ENCODE measurements at regions of chr9 and their contacts with region 1.

Region 1: GRCh38 chr9:71819115-71819739 is 50.9 kb upstream of the CEMIP2 start:
- DNase-seq: peak in 1 of 2 experiments; percentile 5
- H3K4me3 ChIP-seq: no peak overlapping the region
- H3K4me3 Mint-ChIP-seq: no peak overlapping the region
- H3K27ac Mint-ChIP-seq: no peak overlapping the region
- H3K4me1 ChIP-seq: no peaks in the 10 kb centered on the region
- H3K4me1 Mint-ChIP-seq: peaks cover 7% of the 10 kb centered on the region
- H3K27me3 ChIP-seq: no peaks in the 10 kb centered on the region
- H3K27me3 Mint-ChIP-seq: no peaks in the 10 kb centered on the region
- CTCF ChIP-seq: peak in 1 of 2 experiments; percentile 16

Region 2: DNA sequence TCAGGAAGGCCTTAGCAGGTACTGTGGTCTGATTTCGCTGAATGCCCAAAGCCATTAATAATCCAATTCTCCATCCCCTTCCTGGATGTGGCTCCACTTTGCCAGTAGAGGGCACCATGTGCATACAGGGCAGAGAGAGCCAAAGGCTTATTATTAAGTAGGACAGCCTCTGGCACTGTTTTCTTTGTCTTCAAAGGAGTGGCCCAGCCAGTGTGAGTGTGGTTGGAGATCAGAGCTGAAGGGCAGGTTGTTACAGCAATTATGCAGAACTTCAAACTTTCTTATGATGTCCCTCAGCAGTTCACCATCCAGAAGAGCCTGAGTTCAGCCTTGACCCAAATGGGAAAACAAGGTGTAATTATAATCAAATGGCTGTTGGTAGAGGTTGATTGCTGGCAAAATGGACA is 12.3 kb before region 1 on chr9:
- CTCF ChIA-PET with region 1: no interaction called
- POLR2A ChIA-PET with region 1: no interaction called
- intact Hi-C with region 1: no loop called
- DNase-seq: peak; percentile 44 to 51
- H3K4me3 ChIP-seq: no peak overlapping the region
- H3K4me3 Mint-ChIP-seq: no peak overlapping the region
- H3K27ac Mint-ChIP-seq: no peak overlapping the region
- H3K4me1 ChIP-seq: no peaks in the 10 kb centered on the region
- H3K4me1 Mint-ChIP-seq: no peaks in the 10 kb centered on the region
- H3K27me3 ChIP-seq: no peaks in the 10 kb centered on the region
- H3K27me3 Mint-ChIP-seq: no peaks in the 10 kb centered on the region
- CTCF ChIP-seq: peak; percentile 31 to 33

Region 3: GRCh38 chr9:71847892-71848291 is 28.7 kb after region 1 on chr9:
- CTCF ChIA-PET with region 1: no interaction called
- POLR2A ChIA-PET with region 1: no interaction called
- intact Hi-C with region 1: no loop called
- DNase-seq: no peak
- H3K4me3 ChIP-seq: no peak overlapping the region
- H3K4me3 Mint-ChIP-seq: no peak overlapping the region
- H3K27ac Mint-ChIP-seq: no peak overlapping the region
- H3K4me1 ChIP-seq: no peaks in the 10 kb centered on the region
- H3K4me1 Mint-ChIP-seq: no peaks in the 10 kb centered on the region
- H3K27me3 ChIP-seq: no peaks in the 10 kb centered on the region
- H3K27me3 Mint-ChIP-seq: no peaks in the 10 kb centered on the region
- CTCF ChIP-seq: no peak

Region 4: DNA sequence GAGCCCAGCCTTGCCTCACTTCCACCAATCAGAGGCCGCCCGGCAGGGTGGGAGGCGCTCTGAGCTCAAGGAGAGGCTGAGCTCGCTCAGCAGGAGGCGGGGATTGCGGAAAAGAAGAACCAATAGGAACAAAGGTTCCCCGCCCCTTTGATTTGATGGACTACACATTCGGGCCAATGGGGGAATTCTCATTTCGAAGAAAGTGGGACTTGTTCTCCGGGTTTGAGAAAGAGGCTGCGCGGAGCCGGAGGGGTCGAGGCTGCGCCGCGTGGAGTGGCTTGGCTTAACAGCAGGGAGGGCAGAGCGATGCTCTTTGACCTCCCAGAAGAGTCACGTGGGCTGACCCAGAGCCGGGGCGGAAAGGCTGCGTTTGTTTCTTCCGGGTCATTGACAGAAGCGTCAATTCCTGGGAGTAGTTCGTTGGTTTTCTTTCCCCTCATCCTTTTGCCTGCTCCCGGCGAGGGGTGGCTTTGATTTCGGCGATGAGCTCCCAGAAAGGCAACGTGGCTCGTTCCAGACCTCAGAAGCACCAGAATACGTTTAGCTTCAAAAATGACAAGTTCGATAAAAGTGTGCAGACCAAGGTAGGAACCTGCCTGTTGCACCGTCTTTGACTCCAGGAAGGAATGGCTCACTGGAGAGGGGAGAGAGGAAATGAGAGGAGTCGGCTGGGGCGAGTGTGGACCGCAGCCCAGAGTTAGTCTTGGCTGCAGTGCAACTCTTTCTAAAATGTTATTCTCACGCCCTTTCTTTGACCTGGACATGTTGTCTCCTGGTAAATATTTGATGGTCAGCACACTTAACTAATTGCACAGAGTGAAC is 92.2 kb after region 1 on chr9 and contains the start of gene C9orf85:
- CTCF ChIA-PET with region 1: no interaction called
- POLR2A ChIA-PET with region 1: no interaction called
- intact Hi-C with region 1: loop called (anchors 5 kb)
- DNase-seq: peak; percentile 88 to 93
- H3K4me3 ChIP-seq: peak within 1 kb of the TSS; percentile 57
- H3K4me3 Mint-ChIP-seq: peak within 1 kb of the TSS; percentile 79
- H3K27ac Mint-ChIP-seq: peak within 1 kb of the TSS; percentile 78
- H3K4me1 ChIP-seq: no peaks in the 10 kb centered on the region
- H3K4me1 Mint-ChIP-seq: no peaks in the 10 kb centered on the region
- H3K27me3 ChIP-seq: no peaks in the 10 kb centered on the region
- H3K27me3 Mint-ChIP-seq: no peaks in the 10 kb centered on the region
- CTCF ChIP-seq: no peak
- total RNA-seq, gene C9orf85: 2.4 TPM in 2 replicates

Region 5: DNA sequence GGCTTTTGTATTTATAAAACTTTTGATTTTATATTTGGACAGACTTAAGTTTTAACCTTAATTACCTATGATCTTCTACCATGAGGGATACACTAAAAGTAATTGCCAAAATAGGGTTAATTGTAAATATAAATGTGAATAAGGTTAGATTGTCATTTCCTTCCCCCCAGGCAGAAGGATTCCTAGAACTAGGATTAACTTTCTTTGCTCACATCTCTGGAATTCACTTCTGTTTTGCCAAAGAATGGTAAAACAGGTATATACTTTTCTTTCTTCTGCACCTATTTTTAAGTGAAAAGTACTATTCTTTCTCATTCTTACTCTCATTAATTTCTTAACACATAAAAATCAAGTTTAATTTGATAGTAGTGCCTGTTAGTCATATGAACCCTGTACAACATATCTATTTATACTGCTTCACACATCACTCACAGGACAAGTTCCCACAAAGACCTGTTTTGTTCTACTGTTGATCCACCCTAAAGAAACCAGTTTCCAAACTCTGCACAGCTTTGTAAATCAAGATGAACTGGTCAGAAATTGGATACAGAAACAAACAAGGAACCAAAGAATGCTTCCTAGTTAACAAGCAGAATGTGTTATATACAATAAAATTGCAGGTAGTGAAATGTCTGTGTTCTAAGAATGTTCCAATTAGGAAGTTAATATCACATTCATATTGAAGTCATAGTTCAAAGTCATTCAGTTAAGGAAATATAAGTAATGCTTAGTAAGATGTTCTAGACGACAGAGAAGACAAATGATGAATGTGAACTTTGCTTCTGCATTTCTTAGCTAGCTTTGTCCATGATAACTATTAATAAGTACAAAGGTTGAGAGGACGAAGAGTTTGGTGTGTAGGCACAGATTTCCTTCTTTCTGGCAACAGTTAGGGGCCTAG is 125.5 kb after region 1 on chr9:
- CTCF ChIA-PET with region 1: no interaction called
- POLR2A ChIA-PET with region 1: no interaction called
- intact Hi-C with region 1: no loop called
- DNase-seq: no peak
- H3K4me3 ChIP-seq: no peak overlapping the region
- H3K4me3 Mint-ChIP-seq: no peak overlapping the region
- H3K27ac Mint-ChIP-seq: no peak overlapping the region
- H3K4me1 ChIP-seq: no peaks in the 10 kb centered on the region
- H3K4me1 Mint-ChIP-seq: no peaks in the 10 kb centered on the region
- H3K27me3 ChIP-seq: no peaks in the 10 kb centered on the region
- H3K27me3 Mint-ChIP-seq: no peaks in the 10 kb centered on the region
- CTCF ChIP-seq: no peak